ENCODE measurements at regions of chr16 and their contacts with region 1.

Region 1: GRCh38 chr16:19907161-19907992 is 22.7 kb upstream of the GPRC5B start:
- DNase-seq: peak; percentile 54
- H3K4me3 Mint-ChIP-seq: peak overlapping the region; percentile 39
- H3K27ac Mint-ChIP-seq: no peak overlapping the region
- H3K4me1 Mint-ChIP-seq: peaks cover 13% of the 10 kb centered on the region
- H3K27me3 Mint-ChIP-seq: peaks cover 3% of the 10 kb centered on the region

Region 2: DNA sequence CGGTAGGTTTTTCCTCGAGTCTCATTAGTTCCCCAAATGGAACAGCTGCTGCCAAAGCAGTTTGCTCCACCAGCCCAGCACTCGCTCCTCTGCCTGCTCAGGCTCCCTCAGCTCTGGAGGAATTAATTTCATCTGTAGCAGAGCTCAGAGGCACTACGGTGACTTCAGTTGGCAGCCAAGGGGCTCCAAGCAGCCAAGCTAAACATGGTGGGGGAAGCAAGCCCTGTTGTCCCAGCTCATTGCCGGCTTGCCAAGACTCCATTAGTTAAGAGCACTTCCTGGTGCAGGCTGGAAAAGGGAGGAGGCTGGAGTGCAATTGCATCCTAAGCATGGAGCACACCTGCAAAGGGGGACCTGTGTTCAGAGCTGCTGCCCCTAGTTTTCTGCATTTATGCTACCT is 55.9 kb after region 1 on chr16:
- intact Hi-C with region 1: no loop called
- DNase-seq: no peak
- H3K4me3 Mint-ChIP-seq: no peak overlapping the region
- H3K27ac Mint-ChIP-seq: no peak overlapping the region
- H3K4me1 Mint-ChIP-seq: no peaks in the 10 kb centered on the region
- H3K27me3 Mint-ChIP-seq: no peaks in the 10 kb centered on the region

Region 3: GRCh38 chr16:20385844-20386832 is 478.8 kb after region 1 on chr16:
- intact Hi-C with region 1: loop called (anchors 1 kb)
- DNase-seq: peak; percentile 12
- H3K4me3 Mint-ChIP-seq: no peak overlapping the region
- H3K27ac Mint-ChIP-seq: no peak overlapping the region
- H3K4me1 Mint-ChIP-seq: no peaks in the 10 kb centered on the region
- H3K27me3 Mint-ChIP-seq: peaks cover 3% of the 10 kb centered on the region